Activated naive CD4-positive, alpha-beta T cell treated with anti-CD3 and anti-CD28 coated beads for 36 hours (primary cell): ENCODE measurements at regions of chr9 and their contacts with region 1.

Region 1: DNA sequence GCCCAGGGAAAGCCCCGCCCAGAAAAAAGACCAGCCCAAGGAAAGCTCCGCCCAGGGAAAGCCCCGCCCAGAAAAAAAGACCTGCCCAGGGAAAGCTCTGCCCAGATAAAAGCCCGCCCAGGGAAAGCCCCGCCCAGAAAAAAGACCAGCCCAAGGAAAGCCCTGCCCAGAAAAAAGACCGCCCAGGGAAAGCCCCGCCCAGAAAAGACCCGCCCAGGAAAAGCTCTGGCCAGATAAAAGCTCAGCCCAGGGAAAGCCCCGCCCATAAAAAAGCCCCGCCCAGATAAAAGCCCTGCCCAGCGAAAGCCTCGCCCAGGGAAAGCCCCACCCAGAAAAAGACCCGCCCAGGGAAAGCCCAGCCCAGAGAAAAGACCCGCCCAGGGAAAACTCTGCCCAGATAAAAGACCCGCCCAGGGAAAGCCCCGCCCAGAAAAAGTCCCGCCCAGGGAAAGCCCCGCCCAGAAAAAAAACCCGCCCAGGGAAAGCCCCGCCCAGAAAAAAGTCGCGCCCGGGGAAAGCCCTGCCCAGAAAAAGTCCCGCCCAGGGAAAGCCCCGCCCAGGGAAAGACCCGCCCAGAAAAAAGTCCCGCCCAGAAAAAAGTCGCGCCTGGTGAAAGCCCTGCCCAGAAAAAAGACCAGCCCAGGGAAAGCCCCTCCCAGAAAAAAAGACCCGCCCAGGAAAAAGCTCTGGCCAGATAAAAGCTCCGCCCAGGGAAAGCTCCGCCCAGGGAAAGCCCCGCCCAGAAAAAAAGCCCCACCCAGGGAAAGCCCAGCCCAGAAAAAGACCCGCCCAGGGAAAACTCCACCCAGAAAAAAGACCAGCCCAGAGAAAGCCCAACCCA is 11.9 kb downstream of the GRIN1 start:
- DNase-seq: peak; percentile 89
- H3K4me3 Mint-ChIP-seq: no peak overlapping the region
- H3K27ac Mint-ChIP-seq: peak overlapping the region; percentile 61
- H3K4me1 Mint-ChIP-seq: peaks cover 7% of the 10 kb centered on the region
- H3K27me3 Mint-ChIP-seq: peaks cover 16% of the 10 kb centered on the region

Region 2: DNA sequence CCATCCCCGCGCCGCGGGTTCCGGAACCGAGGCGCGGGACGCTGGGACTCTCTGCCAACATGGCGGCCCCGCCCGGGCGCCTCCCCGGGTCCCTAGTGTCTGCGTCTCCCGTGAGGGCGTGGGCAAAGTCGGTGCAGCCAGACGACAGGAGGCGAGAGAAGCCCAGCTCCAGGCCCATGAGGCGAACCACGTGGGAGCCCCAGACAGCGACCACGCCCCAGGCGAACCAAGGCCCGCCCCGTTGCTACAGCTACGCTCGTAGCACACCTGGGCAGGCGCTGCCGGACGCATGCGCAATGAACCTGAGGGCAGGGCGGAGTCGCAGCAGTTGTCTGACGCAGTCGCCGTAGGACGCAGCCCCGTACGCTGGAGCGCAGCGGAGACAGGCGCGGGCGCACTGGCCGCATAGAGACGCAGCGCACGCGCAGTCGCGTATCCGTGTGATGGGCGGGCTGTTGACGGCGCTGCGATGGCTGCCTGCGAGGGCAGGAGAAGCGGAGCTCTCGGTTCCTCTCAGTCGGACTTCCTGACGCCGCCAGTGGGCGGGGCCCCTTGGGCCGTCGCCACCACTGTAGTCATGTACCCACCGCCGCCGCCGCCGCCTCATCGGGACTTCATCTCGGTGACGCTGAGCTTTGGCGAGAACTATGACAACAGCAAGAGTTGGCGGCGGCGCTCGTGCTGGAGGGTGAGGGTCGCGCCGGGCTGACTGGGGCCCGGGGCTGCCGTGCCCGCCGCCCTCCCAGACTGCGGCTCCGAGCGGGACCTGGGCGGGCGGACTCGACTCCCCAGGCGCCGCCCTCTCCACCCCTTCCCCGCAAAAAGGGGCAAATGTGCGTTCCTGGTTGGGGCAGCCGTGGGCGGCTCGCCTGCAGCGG is 64.1 kb before region 1 on chr9 and contains the start of gene MAN1B1:
- CTCF ChIA-PET with region 1: no interaction called
- intact Hi-C with region 1: loop called (anchors 2 kb)
- DNase-seq: peak; percentile 100
- H3K4me3 Mint-ChIP-seq: peak within 1 kb of the TSS; percentile 89
- H3K27ac Mint-ChIP-seq: peak within 1 kb of the TSS; percentile 89
- H3K4me1 Mint-ChIP-seq: peaks cover 36% of the 10 kb centered on the region
- H3K27me3 Mint-ChIP-seq: no peaks in the 10 kb centered on the region
- total RNA-seq, gene MAN1B1: 18.7 to 18.9 TPM

Region 3: GRCh38 chr9:137095664-137096517 is 54.9 kb before region 1 on chr9:
- CTCF ChIA-PET with region 1: no interaction called
- intact Hi-C with region 1: loop called (anchors 2 kb)
- DNase-seq: peak; percentile 95
- H3K4me3 Mint-ChIP-seq: peak overlapping the region; percentile 66
- H3K27ac Mint-ChIP-seq: peak overlapping the region; percentile 88
- H3K4me1 Mint-ChIP-seq: peaks cover 19% of the 10 kb centered on the region
- H3K27me3 Mint-ChIP-seq: no peaks in the 10 kb centered on the region

Region 4: GRCh38 chr9:137166380-137167229 is 15.8 kb after region 1 on chr9:
- CTCF ChIA-PET with region 1: no interaction called
- intact Hi-C with region 1: no loop called
- DNase-seq: no peak
- H3K4me3 Mint-ChIP-seq: no peak overlapping the region
- H3K27ac Mint-ChIP-seq: no peak overlapping the region
- H3K4me1 Mint-ChIP-seq: peaks cover 1% of the 10 kb centered on the region
- H3K27me3 Mint-ChIP-seq: peaks cover 29% of the 10 kb centered on the region

Region 5: DNA sequence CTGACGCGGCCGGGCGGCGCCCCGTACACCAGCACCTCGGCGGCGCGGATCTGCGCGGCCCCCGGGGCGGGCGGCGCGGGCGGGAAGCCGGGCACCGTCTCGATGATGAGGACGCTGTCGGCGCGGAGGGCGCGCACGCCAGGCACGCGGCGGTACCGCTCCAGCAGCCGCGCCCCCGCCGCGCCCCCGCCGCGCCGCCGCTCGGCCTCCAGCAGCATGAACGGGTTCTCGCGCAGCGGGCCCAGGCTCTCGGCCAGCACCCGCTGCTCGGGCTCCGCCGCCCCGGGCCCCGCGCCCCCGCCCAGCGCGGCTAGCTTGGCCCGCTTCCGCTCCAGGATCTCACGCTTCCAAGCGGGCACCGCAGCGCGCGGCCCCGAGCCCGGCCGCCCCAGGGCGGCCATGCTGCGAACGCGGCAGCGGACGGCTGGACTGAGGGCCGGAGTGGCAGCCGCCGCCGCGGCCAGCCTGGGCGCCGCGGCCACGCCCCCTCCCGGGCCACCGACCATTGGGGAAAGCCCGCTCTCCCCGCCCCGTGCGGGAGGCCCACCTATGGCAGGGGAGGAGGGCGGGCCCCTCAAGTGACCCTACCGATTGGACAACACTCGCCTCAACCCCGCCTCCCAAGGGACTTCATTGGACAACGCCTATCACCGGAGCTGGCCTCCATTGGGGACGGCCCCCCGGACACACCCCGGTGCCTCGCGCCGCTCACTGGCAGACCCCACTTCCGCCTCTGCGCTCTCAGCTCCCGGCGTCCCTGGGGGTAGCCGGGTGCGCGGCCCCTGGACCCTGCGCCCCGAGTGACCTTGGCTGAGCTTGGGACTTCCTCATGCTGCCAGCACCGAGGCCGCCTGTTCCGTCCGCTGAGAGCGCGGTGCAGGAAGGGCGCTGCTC is 49.7 kb after region 1 on chr9 and contains the start of gene TPRN:
- CTCF ChIA-PET with region 1: no interaction called
- intact Hi-C with region 1: loop called (anchors 2 kb)
- DNase-seq: peak; percentile 99
- H3K4me3 Mint-ChIP-seq: peak within 1 kb of the TSS; percentile 80
- H3K27ac Mint-ChIP-seq: peak within 1 kb of the TSS; percentile 56
- H3K4me1 Mint-ChIP-seq: peaks cover 33% of the 10 kb centered on the region
- H3K27me3 Mint-ChIP-seq: no peaks in the 10 kb centered on the region
- total RNA-seq, gene TPRN: 2.1 to 2.6 TPM

Region 6: DNA sequence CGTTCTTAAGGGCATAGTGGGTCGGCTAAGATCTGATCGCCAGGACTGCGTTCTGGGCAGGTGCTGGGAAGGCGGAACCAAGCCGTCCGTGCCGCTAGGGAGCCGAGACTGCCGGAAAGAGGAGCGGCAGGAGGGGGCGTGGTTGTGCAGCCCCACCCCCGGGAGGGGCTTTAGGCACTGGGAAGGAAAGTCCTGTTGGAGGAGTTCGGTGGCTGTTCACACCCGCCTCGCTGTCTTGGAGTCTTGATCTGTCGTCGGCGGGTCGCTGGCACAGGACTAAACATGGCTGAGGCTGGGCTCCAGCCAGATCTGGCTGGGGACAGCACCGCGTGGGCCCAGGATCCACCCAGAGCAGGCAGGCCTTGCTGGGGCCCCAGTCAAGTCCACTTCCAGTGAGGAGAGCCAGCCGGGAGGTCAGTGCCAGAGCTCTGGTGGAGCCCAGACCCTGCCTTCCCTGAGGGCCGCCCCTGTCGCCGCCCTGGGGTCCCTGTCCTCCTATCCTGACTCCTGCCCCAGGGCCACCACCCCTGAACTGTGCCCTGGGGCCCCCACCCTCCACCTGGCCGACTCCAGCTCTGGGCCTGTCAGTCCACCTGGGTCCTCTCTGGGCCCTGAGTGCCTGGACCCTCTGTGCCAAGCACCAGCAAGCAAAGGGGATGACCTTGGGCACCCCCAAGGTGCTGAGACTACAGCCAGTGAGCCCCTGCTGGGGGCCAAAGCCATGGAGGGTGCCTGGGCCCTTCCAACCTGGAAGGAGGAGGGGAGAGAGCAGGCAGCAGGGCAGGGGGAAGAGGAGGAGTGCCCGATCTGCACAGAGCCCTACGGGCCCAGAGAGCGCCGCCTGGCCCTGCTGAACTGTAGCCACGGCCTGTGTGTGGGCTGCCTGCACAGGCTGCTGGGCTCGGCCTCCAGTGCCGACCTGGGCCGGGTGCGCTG is 66.7 kb after region 1 on chr9:
- CTCF ChIA-PET with region 1: no interaction called
- intact Hi-C with region 1: no loop called
- DNase-seq: no peak
- H3K4me3 Mint-ChIP-seq: no peak overlapping the region
- H3K27ac Mint-ChIP-seq: no peak overlapping the region
- H3K4me1 Mint-ChIP-seq: no peaks in the 10 kb centered on the region
- H3K27me3 Mint-ChIP-seq: no peaks in the 10 kb centered on the region

Region 7: GRCh38 chr9:137453643-137454081 is 302.8 kb after region 1 on chr9:
- CTCF ChIA-PET with region 1: no interaction called
- intact Hi-C with region 1: loop called (anchors 5 kb)
- DNase-seq: peak; percentile 76
- H3K4me3 Mint-ChIP-seq: peak overlapping the region; percentile 18
- H3K27ac Mint-ChIP-seq: no peak overlapping the region
- H3K4me1 Mint-ChIP-seq: peaks cover 44% of the 10 kb centered on the region
- H3K27me3 Mint-ChIP-seq: no peaks in the 10 kb centered on the region